ENCODE measurements at regions of chr7 and their contacts with region 1.

Region 1: GRCh38 chr7:23334482-23335056 is 35.4 kb downstream of the MALSU1 start:
- DNase-seq: peak; percentile 80 to 100
- H3K4me3 ChIP-seq: no peak overlapping the region
- H3K27ac ChIP-seq: peak overlapping the region; percentile 60
- H3K4me1 ChIP-seq: peaks cover 52% of the 10 kb centered on the region
- H3K27me3 ChIP-seq: no peaks in the 10 kb centered on the region
- CTCF ChIP-seq: no peak

Region 2: GRCh38 chr7:23383225-23383624 is 48.7 kb after region 1 on chr7:
- CTCF ChIA-PET with region 1: no interaction called
- POLR2A ChIA-PET with region 1: no interaction called
- intact Hi-C with region 1: no loop called
- DNase-seq: no peak
- H3K4me3 ChIP-seq: no peak overlapping the region
- H3K27ac ChIP-seq: no peak overlapping the region
- H3K4me1 ChIP-seq: peaks cover 6% of the 10 kb centered on the region; the same call in 1 of the 2 replicates
- H3K27me3 ChIP-seq: no peaks in the 10 kb centered on the region
- CTCF ChIP-seq: no peak

Region 3: DNA sequence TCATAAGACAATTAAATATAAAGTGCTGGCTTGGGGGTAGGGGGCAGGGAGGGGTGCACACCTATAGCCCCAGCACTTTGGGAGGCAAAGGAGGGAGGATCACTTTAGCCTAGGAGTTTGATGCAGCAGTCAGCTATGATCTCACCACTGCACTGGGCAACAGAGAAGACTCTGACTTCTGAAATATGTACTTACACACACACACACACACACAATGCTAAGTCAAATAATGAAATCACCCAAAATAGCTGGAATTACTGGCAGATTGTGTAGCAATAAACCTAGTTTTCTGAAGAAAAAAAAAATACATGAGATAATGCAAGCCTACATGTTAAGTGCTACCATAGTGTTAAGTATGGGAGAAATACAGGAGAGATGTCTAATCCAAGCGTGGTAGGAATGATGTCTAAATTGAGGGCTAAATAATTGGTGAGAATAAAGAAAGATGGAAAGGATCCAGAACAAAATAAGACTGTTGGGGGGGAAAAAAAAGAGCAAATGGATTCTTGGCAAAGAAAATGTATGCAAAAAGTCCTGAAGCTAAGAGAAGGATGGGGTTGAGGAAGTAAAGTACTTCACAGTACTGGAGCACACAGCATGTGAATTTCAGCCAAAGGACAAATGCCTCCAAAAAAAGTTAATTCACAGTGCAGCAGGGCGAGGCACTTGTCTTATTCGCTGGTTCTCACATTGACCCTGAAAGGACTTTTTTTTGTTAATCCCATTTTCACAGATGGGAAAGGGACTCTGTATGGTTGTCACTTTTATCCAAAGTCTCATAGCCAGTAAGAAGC is 61.9 kb after region 1 on chr7:
- CTCF ChIA-PET with region 1: no interaction called
- POLR2A ChIA-PET with region 1: no interaction called
- intact Hi-C with region 1: no loop called
- DNase-seq: peak in 1 of 2 experiments; percentile 25
- H3K4me3 ChIP-seq: no peak overlapping the region
- H3K27ac ChIP-seq: no peak overlapping the region
- H3K4me1 ChIP-seq: peaks cover 6% of the 10 kb centered on the region
- H3K27me3 ChIP-seq: no peaks in the 10 kb centered on the region
- CTCF ChIP-seq: no peak

Region 4: DNA sequence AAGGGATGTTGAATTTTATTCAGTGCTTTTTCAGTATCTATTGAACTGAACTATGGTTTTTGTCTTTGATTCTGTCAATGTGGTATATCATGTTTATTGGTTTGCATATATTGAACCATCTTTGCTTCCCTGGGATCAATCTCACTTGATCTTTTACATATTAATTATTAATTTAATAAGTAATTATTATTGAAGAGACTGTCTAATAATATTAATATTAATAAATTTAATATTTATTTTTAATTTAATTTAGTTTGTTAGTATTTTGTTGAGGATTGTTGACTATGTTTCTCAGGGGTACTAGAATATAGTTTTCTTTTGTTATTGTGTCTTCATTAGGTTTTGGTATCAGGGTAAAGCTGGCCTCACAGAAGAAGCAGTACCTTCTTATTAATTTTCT is 223.7 kb after region 1 on chr7:
- CTCF ChIA-PET with region 1: interaction called, 13 read pairs
- POLR2A ChIA-PET with region 1: no interaction called
- intact Hi-C with region 1: no loop called
- DNase-seq: no peak
- H3K4me3 ChIP-seq: no peak overlapping the region
- H3K27ac ChIP-seq: no peak overlapping the region
- H3K4me1 ChIP-seq: no peaks in the 10 kb centered on the region
- H3K27me3 ChIP-seq: no peaks in the 10 kb centered on the region
- CTCF ChIP-seq: no peak